Heart left ventricle (tissue), 16 donors: ENCODE measurements at regions of chr15 and their contacts with region 1.

Region 1: GRCh38 chr15:91970142-91970541 is 116.6 kb downstream of the SLCO3A1 start:
- DNase-seq: peak; percentile 63 to 88 (median 81)
- ATAC-seq: peak; percentile 81 to 87 (median 83)
- H3K4me3 ChIP-seq: no peak overlapping the region
- H3K27ac ChIP-seq: peak overlapping the region in 10 of 12 donors; percentile 35 to 72 (median 57)
- H3K4me1 ChIP-seq: peaks cover 4 to 85% (median 75%) of the 10 kb centered on the region in 12 donors
- H3K27me3 ChIP-seq: no peaks in the 10 kb centered on the region
- CTCF ChIP-seq: no peak
- POLR2A ChIP-seq: no peak

Region 2: GRCh38 chr15:91885714-91886270 is 84.3 kb before region 1 on chr15:
- intact Hi-C with region 1: loop called in 1 of 10 experiments (anchors 5 kb)
- DNase-seq: no peak
- ATAC-seq: peak in 3 of 4 donors; percentile 14 to 29 (median 22)
- H3K4me3 ChIP-seq: no peak overlapping the region
- H3K27ac ChIP-seq: no peak overlapping the region
- H3K4me1 ChIP-seq: peaks cover 3 to 83% (median 46%) of the 10 kb centered on the region in 12 donors
- H3K27me3 ChIP-seq: no peaks in the 10 kb centered on the region
- CTCF ChIP-seq: peak in 8 of 12 donors; percentile 14 to 42 (median 26)
- POLR2A ChIP-seq: no peak

Region 3: GRCh38 chr15:91908391-91908790 is 61.8 kb before region 1 on chr15:
- intact Hi-C with region 1: no loop called
- DNase-seq: no peak
- ATAC-seq: no peak
- H3K4me3 ChIP-seq: no peak overlapping the region
- H3K27ac ChIP-seq: no peak overlapping the region
- H3K4me1 ChIP-seq: peaks cover 0 to 47% (median 14%) of the 10 kb centered on the region in 12 donors
- H3K27me3 ChIP-seq: no peaks in the 10 kb centered on the region
- CTCF ChIP-seq: no peak
- POLR2A ChIP-seq: no peak

Region 4: GRCh38 chr15:91926908-91927270 is 43.3 kb before region 1 on chr15:
- intact Hi-C with region 1: loop called in 1 of 10 experiments (anchors 5 kb)
- DNase-seq: no peak
- ATAC-seq: peak; percentile 33 to 54 (median 36)
- H3K4me3 ChIP-seq: no peak overlapping the region
- H3K27ac ChIP-seq: peak overlapping the region in 11 of 12 donors; percentile 4 to 69 (median 47)
- H3K4me1 ChIP-seq: peaks cover 6 to 85% (median 76%) of the 10 kb centered on the region in 12 donors
- H3K27me3 ChIP-seq: no peaks in the 10 kb centered on the region
- CTCF ChIP-seq: no peak
- POLR2A ChIP-seq: no peak

Region 5: GRCh38 chr15:92005154-92005553 is 35.0 kb after region 1 on chr15:
- intact Hi-C with region 1: loop called in 1 of 10 experiments (anchors 5 kb)
- DNase-seq: no peak
- ATAC-seq: no peak
- H3K4me3 ChIP-seq: no peak overlapping the region
- H3K27ac ChIP-seq: no peak overlapping the region
- H3K4me1 ChIP-seq: peaks cover 7 to 51% (median 24%) of the 10 kb centered on the region in 12 donors
- H3K27me3 ChIP-seq: no peaks in the 10 kb centered on the region
- CTCF ChIP-seq: no peak
- POLR2A ChIP-seq: no peak

Region 6: DNA sequence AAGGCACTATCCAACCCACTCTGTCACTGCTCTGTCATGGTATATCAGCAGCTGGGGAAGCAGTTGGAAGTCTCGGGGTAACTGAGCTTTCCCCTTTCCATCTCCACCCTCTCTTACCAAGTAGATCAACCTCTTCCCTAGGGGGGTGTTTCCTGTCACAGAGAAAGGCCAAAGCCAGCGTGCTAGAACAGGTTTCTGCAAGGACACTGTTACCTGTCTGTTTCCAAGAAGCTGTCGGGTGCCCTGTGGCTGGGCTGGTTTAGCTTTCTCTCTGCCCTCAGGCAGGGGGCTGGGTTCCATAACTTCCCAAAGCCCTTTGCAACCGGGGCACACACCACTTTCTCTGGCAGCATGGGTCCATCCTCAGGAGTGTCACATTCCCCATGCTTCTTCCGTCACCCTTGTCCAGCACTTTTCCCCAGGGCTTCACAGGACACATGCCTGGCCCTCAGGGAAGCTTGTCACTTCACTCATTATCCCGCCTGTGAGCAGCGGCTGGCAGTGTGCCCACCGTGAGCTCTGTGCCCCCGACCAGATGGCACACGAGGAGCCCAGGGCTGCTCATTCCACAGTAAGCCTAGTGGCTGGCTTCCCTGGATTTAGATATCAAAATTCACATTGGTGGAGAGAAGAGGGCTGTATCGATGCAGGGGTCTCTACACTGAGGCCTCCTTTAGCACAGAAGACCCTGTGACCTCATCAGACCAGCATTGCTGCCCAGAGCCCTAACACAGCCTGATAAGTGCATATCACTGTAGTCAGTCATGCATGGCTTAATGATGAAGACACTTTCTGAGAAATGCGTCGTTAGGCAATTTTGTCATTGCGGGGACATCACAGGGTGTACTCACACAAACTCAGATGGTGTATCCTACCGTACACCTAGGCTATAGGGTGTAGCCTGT is 89.2 kb after region 1 on chr15:
- intact Hi-C with region 1: loop called in 1 of 10 experiments (anchors 5 kb)
- DNase-seq: peak in 4 of 5 donors; percentile 50 to 79 (median 56)
- ATAC-seq: peak; percentile 53 to 67 (median 62)
- H3K4me3 ChIP-seq: no peak overlapping the region
- H3K27ac ChIP-seq: peak overlapping the region in 9 of 12 donors; percentile 48 to 80 (median 65)
- H3K4me1 ChIP-seq: peaks cover 0 to 68% (median 33%) of the 10 kb centered on the region in 12 donors
- H3K27me3 ChIP-seq: no peaks in the 10 kb centered on the region
- CTCF ChIP-seq: no peak
- POLR2A ChIP-seq: no peak

Region 7: DNA sequence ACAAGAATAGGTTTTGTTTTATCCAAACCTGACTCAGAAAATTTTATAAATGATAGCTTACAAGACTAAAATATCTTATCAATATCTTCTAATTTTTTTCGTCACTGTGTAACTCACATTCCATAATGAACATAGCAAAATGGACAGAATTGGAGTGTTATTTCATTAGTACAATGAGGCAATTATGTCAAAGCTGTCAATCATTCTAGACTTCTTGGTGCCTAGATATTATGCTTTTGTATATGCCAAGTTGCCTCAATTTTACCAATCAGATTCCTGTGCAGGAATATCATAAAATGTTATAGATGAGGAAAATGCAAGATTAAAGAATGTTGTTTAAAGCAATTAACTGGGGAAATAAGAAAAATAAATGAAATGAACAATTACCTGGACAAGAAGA is 247.8 kb after region 1 on chr15:
- intact Hi-C with region 1: no loop called
- DNase-seq: no peak
- ATAC-seq: no peak
- H3K4me3 ChIP-seq: no peak overlapping the region
- H3K27ac ChIP-seq: no peak overlapping the region
- H3K4me1 ChIP-seq: no peaks in the 10 kb centered on the region
- H3K27me3 ChIP-seq: no peaks in the 10 kb centered on the region
- CTCF ChIP-seq: no peak
- POLR2A ChIP-seq: no peak